Aorta (tissue), 5 donors: ENCODE measurements at regions of chr20 and their contacts with region 1.

Region 1: DNA sequence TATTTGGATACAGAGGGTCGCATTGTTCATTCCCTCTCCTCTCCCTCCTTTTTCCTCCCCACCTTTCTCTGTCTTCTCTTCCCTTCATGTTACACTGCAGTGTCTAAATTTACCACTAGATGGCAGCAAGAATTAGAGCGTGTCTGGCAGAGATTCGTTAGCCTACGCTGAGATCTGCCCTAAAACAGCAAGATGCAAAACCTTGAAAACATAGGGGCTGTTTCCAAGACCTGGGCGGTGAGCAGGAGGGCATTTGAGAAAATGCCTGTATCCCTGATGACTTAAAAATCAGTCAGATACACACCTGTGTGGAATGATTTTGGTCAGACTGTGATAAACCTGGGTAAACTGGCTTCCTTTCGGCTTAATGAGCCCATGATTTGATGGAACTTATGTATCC is 101.5 kb upstream of the ISM1 start:
- DNase-seq: no peak
- ATAC-seq: peak; percentile 83
- H3K4me3 ChIP-seq: no peak overlapping the region
- H3K27ac ChIP-seq: no peak overlapping the region
- H3K4me1 ChIP-seq: no peaks in the 10 kb centered on the region
- H3K27me3 ChIP-seq: no peaks in the 10 kb centered on the region

Region 2: GRCh38 chr20:13085275-13085674 is 34.3 kb before region 1 on chr20:
- intact Hi-C with region 1: no loop called
- DNase-seq: no peak
- ATAC-seq: no peak
- H3K4me3 ChIP-seq: no peak overlapping the region
- H3K27ac ChIP-seq: no peak overlapping the region
- H3K4me1 ChIP-seq: no peaks in the 10 kb centered on the region
- H3K27me3 ChIP-seq: no peaks in the 10 kb centered on the region

Region 3: DNA sequence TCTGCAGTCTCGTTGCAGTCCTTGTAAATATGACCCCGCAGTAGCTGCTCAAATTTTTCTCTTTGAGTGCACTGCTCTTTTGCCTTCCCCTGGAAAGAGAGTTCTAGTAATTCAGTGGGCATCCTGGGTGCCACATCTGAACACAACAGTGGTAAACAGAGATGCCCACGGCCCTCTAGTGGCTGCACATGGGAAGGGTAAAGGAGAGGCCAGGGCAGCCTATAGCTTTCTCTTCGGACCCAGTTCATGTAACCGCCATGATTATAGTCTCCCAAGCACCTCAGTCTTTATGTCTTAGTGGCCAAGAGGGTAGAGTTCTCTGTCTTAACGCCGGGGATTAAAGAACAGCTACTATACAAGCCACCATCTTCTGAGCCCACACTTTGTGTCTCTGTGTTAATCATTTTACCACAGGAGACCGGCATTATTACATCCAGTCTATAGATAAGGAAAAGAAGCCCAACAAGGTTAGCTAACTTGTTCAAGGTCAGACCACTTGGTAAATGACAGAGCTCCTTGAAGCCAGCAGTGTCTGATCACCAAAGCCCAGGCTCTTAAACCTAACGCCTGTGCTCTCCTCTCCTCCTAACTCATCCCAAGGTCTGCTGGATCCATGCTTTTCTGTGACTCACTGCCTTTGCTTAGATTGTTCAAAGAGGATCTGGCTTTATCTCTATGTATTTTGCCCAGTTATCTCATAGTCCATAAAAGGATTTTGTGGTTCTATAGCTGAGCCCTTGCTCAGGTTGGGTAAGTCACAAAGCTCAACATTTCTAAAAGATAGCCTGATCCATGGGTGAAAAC is 183.3 kb after region 1 on chr20:
- intact Hi-C with region 1: loop called in 1 of 2 experiments (anchors 10 kb)
- DNase-seq: no peak
- ATAC-seq: no peak
- H3K4me3 ChIP-seq: no peak overlapping the region
- H3K27ac ChIP-seq: no peak overlapping the region
- H3K4me1 ChIP-seq: no peaks in the 10 kb centered on the region
- H3K27me3 ChIP-seq: no peaks in the 10 kb centered on the region

Region 4: GRCh38 chr20:13546497-13547131 is 427.0 kb after region 1 on chr20:
- intact Hi-C with region 1: loop called in 1 of 2 experiments (anchors 10 kb)
- DNase-seq: peak; percentile 70 to 92
- ATAC-seq: peak; percentile 71
- H3K4me3 ChIP-seq: no peak overlapping the region
- H3K27ac ChIP-seq: no peak overlapping the region
- H3K4me1 ChIP-seq: no peaks in the 10 kb centered on the region
- H3K27me3 ChIP-seq: no peaks in the 10 kb centered on the region

Region 5: GRCh38 chr20:13771853-13772453 is 652.4 kb after region 1 on chr20:
- intact Hi-C with region 1: loop called (anchors 5 kb)
- DNase-seq: no peak
- ATAC-seq: no peak
- H3K4me3 ChIP-seq: no peak overlapping the region
- H3K27ac ChIP-seq: no peak overlapping the region
- H3K4me1 ChIP-seq: no peaks in the 10 kb centered on the region
- H3K27me3 ChIP-seq: peaks cover 0 to 2% of the 10 kb centered on the region in 2 donors

Region 6: GRCh38 chr20:13784893-13785715 is 665.5 kb after region 1 on chr20 and contains the starts of genes ESF1 and NDUFAF5:
- intact Hi-C with region 1: loop called in 1 of 2 experiments (anchors 5 kb)
- DNase-seq: peak; percentile 96 to 97
- ATAC-seq: peak; percentile 98
- H3K4me3 ChIP-seq: peak within 1 kb of the TSS; percentile 57 to 69
- H3K27ac ChIP-seq: peak within 1 kb of the TSS in 1 of 2 donors; percentile 13
- H3K4me1 ChIP-seq: peaks cover 0 to 8% of the 10 kb centered on the region in 2 donors
- H3K27me3 ChIP-seq: no peaks in the 10 kb centered on the region
- total RNA-seq, gene ESF1: 14.3 to 18.2 TPM
- total RNA-seq, gene NDUFAF5: 24.3 to 27.0 TPM

Region 7: DNA sequence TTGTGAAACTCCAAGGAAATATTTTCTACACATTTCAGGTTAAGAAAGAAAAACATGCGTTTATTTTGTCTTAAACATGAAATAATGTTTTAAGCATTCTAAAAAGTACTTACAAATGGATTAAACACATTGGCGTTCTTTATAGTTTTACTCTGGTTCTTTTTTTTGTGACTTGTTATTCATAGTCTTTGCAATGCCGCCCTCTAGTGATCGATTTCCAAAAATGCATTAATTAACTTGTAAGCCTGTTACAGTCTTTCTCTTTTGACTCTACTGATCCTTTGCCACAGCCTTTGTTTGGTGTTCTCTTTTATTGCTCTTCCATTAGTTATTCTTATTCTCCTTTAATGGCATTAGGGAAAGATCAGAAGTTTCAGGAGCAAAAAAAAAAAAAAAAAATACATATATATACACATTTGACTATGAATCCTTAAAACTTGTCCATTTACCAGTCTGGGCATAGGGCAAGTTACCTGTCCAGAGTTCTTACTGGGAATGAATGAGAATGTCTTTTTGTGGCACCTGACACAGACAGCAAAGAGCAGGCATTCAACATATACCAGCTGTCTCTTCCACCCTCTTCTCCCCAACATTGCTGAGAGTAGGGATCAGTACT is 935.7 kb after region 1 on chr20:
- intact Hi-C with region 1: loop called in 1 of 2 experiments (anchors 10 kb)
- DNase-seq: no peak
- ATAC-seq: peak; percentile 76
- H3K4me3 ChIP-seq: no peak overlapping the region
- H3K27ac ChIP-seq: no peak overlapping the region
- H3K4me1 ChIP-seq: no peaks in the 10 kb centered on the region
- H3K27me3 ChIP-seq: no peaks in the 10 kb centered on the region